Activated CD4-positive, alpha-beta T cell treated with anti-CD3 and anti-CD28 coated beads for 36 hours (primary cell): ENCODE measurements at regions of chr1 and their contacts with region 1.

Region 1: GRCh38 chr1:21077085-21077484 is 99.6 kb downstream of the EIF4G3 start:
- DNase-seq: no peak
- ATAC-seq: no peak
- H3K4me3 Mint-ChIP-seq: no peak overlapping the region
- H3K27ac Mint-ChIP-seq: no peak overlapping the region
- H3K4me1 Mint-ChIP-seq: peaks cover 4% of the 10 kb centered on the region
- H3K27me3 Mint-ChIP-seq: no peaks in the 10 kb centered on the region

Region 2: GRCh38 chr1:21937372-21938221 is 860.5 kb after region 1 on chr1:
- CTCF ChIA-PET with region 1: no interaction called
- POLR2A ChIA-PET with region 1: interaction called, 11 read pairs
- intact Hi-C with region 1: no loop called
- DNase-seq: peak; percentile 79
- ATAC-seq: peak; percentile 80
- H3K4me3 Mint-ChIP-seq: peak overlapping the region; percentile 74
- H3K27ac Mint-ChIP-seq: peak overlapping the region; percentile 80
- H3K4me1 Mint-ChIP-seq: peaks cover 20% of the 10 kb centered on the region
- H3K27me3 Mint-ChIP-seq: peaks cover 10% of the 10 kb centered on the region